ENCODE measurements at regions of chr20 and their contacts with region 1.

Region 1: GRCh38 chr20:17938871-17939619 is 29.5 kb downstream of the SNX5 start:
- DNase-seq: peak; percentile 78
- CTCF ChIP-seq: peak; percentile 92

Region 2: DNA sequence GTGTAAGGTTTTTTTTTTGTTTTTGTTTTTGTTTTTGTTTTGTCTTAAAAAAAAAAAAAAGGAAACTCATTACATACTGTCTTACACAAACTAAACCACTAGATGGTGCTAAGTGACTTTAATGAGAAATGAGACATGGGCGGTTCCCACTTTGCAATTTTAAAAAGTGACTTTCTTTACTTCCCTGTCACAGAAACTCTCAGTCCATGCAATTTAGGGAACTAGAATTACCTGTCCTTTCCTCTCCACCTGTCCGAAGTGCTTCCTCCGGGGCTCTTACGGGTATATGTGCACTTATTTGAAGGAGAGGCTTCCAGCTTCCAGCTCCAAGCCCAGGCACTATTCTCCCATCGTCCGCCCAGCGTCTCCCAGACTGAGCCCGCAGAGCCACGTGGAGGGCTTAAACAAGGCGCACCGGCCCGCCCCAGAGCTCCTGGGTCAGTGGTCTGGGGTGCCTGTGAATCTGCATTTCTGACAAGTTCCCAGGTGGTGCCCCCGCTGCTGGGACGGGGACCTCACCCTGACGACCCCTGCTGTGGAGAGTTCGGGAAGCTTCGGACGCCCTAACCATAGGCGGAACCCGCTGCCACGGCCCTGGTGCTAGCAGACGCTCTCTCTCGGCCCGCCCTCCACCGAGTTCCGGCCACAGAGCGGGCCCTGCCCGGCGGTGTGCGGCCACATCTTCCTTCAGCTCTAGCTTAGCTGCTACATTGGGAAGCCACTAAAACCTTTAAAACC is 434.0 kb before region 1 on chr20:
- CTCF ChIA-PET with region 1: interaction called, 21 read pairs
- POLR2A ChIA-PET with region 1: interaction called, 3 read pairs
- DNase-seq: peak; percentile 73
- CTCF ChIP-seq: peak; percentile 56

Region 3: GRCh38 chr20:17854307-17854903 is 84.6 kb before region 1 on chr20:
- CTCF ChIA-PET with region 1: interaction called, 11 read pairs
- POLR2A ChIA-PET with region 1: no interaction called
- DNase-seq: no peak
- CTCF ChIP-seq: no peak

Region 4: DNA sequence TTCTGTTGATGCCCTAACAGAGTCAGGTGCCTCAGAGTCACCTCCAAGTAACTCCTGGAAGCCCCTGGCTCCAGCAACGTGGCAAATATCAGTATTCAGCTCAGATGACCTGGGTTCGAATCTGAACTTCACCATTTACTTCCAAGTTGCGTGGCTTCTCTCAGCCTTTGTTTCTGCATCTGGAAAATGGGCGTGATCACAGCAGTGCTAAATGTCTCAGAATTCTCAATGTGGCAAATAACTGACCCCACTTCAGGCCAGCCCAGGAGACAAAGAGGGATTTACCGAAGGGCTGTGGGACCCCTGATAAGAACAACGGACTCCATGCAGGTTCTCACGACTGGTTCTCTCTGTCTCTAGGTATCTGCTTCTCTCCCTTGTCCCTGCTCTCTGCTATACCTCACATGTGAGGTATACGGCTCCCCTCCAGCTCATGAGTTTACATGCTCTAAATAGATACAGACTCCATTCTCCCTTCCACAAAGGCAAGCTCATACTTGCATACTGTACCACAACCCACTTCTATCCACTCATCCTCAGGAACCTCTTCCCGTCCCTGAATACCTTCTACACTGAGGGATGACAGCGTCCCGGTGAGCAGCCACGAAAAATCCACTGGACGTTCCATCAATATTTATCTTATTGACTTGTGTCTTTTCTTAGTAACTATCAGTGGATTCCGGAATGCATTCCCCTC is 54.6 kb before region 1 on chr20:
- CTCF ChIA-PET with region 1: no interaction called
- POLR2A ChIA-PET with region 1: no interaction called
- DNase-seq: no peak
- CTCF ChIP-seq: no peak

Region 5: GRCh38 chr20:17916433-17916891 is 22.6 kb before region 1 on chr20:
- CTCF ChIA-PET with region 1: interaction called, 16 read pairs
- POLR2A ChIA-PET with region 1: no interaction called
- DNase-seq: no peak
- CTCF ChIP-seq: no peak

Region 6: GRCh38 chr20:17952692-17953684 is 13.9 kb after region 1 on chr20:
- CTCF ChIA-PET with region 1: interaction called, 28 read pairs
- POLR2A ChIA-PET with region 1: interaction called, 5 read pairs
- DNase-seq: no peak
- CTCF ChIP-seq: no peak

Measured in GM10248 (cell line).